AG04450 (cell line): ENCODE measurements at regions of chr19 and their contacts with region 1.

Region 1: GRCh38 chr19:13861732-13862531 is 15.0 kb upstream of the NANOS3 start:
- DNase-seq: peak; percentile 74
- H3K4me3 ChIP-seq: peak overlapping the region; percentile 49
- H3K27ac ChIP-seq: peak overlapping the region; percentile 90
- H3K27me3 ChIP-seq: no peaks in the 10 kb centered on the region
- CTCF ChIP-seq: peak; percentile 93

Region 2: DNA sequence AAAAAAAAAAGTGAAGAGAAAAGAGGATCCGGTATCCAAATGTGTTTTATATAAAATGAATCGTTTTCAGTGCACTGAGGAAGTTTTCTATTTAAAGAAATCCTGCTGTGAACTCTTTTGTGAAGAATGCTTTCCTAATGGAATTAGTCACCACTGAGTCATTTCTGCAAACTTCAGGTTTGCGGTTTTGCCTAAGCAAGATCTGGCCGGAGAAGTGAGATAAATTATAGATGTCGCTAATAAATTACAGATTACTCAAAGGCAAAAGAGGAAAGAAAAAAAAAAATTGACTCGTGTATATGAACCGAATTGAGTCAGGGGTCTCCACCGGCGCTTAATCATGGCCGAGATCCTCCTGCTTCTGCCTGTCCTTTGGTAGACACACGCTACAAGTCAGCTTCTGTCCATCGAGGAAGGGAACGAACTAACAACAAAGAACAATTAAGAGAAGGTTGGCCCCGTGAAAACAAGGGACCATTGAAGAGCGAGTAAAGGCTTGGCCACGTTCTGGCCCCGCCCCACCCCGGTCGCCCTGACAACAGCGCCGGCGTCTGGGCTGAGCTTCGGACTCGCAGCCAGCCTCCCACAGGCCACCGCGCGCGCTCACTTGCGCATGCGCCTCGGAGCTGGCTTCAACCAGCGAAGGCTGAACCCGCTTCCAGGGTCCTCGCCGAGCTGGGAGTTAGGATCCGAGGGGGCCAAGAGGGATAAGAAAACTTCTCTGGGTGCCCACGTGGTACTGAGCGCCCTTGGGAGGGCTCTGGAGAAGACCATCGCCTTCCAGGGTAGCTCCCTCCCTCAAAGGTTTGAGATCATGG is 130.6 kb before region 1 on chr19:
- CTCF ChIA-PET with region 1: interaction called, 13 read pairs
- POLR2A ChIA-PET with region 1: interaction called, 3 read pairs
- DNase-seq: peak; percentile 90
- H3K4me3 ChIP-seq: peak overlapping the region; percentile 83
- H3K27ac ChIP-seq: peak overlapping the region; percentile 99
- H3K27me3 ChIP-seq: peaks cover 2% of the 10 kb centered on the region
- CTCF ChIP-seq: no peak

Region 3: GRCh38 chr19:13839130-13839937 is 22.6 kb before region 1 on chr19:
- CTCF ChIA-PET with region 1: interaction called, 8 read pairs
- POLR2A ChIA-PET with region 1: interaction called, 27 read pairs
- DNase-seq: no peak
- H3K4me3 ChIP-seq: peak overlapping the region; percentile 88
- H3K27ac ChIP-seq: peak overlapping the region; percentile 90
- H3K27me3 ChIP-seq: no peaks in the 10 kb centered on the region
- CTCF ChIP-seq: no peak

Region 4: DNA sequence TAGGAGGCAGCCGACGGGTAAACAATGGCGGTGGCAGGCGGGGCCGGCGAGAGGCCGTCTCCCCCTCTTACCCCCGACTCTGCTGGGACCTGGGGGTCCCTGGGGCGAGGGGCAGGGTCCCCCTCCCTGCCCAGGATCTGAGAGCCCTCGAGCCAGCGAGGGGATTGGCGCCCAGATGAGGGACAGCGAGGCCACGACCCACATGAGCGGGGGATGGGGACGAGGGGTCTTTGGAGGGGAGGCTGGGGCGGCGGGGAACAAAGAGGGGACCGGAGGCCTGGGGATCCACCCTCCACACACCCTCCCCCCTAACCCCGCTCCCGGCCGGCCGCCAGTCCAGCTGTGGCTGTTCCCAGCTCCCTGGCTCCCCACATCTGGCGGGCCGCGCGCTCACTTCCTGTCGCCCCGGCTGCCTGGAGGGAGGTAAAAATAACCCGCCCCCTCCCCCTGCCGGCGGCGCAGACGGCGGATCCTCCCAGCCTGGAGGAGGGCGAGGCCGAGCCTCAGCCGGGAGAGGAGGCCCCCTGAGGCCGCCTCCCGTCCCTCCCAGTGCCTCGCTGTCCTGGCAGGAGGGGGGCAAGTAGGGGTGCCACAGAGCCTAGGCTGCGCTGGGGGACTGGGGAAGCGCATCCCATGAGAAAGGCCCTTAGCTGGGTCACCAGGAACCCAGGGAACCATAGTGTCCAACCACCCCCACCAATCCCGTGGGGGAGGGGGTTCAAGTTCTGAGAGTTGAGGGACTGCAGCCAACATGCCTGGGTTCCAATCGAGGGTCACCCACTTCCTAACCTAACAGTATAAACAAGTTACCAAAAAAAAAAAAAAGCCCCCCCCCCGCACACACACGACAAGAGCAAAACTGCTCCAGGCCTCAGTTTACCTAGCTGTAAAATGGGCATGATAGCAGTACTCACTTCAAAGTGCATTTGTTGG is 14.3 kb before region 1 on chr19:
- CTCF ChIA-PET with region 1: interaction called, 32 read pairs
- POLR2A ChIA-PET with region 1: interaction called, 33 read pairs
- DNase-seq: peak; percentile 82
- H3K4me3 ChIP-seq: peak overlapping the region; percentile 58
- H3K27ac ChIP-seq: peak overlapping the region; percentile 100
- H3K27me3 ChIP-seq: no peaks in the 10 kb centered on the region
- CTCF ChIP-seq: no peak

Region 5: GRCh38 chr19:13880059-13881043 is 18.4 kb after region 1 on chr19:
- CTCF ChIA-PET with region 1: no interaction called
- POLR2A ChIA-PET with region 1: no interaction called
- DNase-seq: peak; percentile 84
- H3K4me3 ChIP-seq: peak overlapping the region; percentile 36
- H3K27ac ChIP-seq: peak overlapping the region; percentile 39
- H3K27me3 ChIP-seq: peaks cover 2% of the 10 kb centered on the region
- CTCF ChIP-seq: peak; percentile 98

Region 6: DNA sequence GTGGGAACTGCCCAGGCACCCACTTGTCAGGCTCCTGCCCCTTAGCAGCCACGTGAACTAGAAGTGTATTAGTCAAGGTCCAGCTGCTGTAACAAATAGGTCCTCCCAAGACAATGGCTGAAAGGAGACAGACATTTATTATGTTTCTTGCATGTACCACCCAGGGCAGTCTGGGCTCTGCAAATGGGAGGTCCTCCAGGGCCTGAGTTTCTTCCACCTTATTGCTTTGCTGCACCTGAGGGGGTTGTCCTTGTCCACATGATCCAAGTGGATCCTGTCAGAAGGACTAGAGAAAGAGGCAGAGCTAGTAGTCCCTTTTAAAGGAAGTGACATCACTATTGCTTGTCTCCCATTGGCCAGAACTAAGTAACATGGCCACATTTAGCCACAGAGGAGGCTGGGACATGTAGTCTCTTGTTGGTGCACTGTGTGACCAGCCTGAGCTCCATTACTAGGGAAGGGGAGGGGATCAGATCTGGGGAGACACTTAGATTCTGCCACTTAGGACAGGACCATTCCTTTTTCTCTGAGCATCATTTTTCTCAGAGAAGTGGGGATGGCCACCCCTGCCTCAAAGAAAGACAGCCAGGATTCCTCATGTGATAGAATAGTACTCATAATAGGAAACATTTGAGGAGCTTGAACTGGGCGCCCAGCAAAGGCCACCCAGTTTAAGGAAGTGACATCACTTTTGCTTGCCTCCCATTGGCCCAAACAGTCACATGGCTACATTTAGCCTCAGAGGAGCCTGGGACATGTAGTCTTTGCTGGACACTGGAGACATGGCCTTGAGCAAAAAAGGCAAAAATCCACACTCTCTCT is 59.2 kb after region 1 on chr19:
- CTCF ChIA-PET with region 1: no interaction called
- POLR2A ChIA-PET with region 1: no interaction called
- DNase-seq: no peak
- H3K4me3 ChIP-seq: no peak overlapping the region
- H3K27ac ChIP-seq: no peak overlapping the region
- H3K27me3 ChIP-seq: no peaks in the 10 kb centered on the region
- CTCF ChIP-seq: no peak